PC-9 (cell line): ENCODE measurements at regions of chr12 and their contacts with region 1.

Region 1: DNA sequence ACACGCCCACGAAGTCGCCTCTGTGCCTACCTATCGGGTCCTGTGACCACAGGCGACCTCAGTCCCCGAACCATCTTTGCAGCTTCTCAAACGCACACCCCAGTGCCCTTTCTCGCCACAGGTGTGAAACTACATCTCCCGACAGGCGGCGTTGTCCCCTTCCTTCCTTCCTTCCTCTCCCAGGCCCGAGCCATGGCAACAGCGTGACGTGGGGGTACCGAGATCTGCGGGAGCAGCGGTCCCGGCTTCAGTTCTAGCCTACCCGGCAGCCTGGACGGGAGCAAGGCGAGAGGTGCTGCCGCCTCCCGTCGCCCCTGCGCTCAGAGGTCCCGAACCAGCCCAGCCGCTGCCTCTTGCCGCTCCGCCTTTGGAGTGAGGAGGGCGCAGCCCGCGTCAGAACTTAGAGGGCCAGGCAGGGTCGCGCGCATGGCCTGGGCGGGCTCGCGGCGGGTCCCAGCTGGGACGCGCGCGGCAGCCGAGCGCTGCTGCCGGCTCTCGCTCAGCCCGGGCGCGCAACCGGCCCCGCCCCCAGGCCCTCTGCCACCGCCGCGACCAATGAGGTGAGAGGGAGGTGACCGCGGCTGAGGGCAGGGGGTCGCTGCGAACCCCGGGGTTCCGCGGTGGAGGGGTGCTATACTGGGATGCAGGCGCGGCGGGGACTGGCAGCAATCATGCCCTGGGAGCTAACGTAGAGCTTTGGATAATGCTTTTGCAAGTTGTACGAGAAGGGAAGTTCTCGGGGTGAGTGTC is at the start of gene COQ10A:
- DNase-seq: peak; percentile 57 to 85
- H3K4me3 ChIP-seq: peak within 1 kb of the TSS; percentile 75
- H3K27ac ChIP-seq: no peak within 1 kb of the TSS
- H3K4me1 ChIP-seq: peaks cover 15% of the 10 kb centered on the region
- H3K27me3 ChIP-seq: no peaks in the 10 kb centered on the region
- CTCF ChIP-seq: peak; percentile 73
- total RNA-seq, gene COQ10A: 6.5 and 6.9 TPM in 2 replicates

Region 2: DNA sequence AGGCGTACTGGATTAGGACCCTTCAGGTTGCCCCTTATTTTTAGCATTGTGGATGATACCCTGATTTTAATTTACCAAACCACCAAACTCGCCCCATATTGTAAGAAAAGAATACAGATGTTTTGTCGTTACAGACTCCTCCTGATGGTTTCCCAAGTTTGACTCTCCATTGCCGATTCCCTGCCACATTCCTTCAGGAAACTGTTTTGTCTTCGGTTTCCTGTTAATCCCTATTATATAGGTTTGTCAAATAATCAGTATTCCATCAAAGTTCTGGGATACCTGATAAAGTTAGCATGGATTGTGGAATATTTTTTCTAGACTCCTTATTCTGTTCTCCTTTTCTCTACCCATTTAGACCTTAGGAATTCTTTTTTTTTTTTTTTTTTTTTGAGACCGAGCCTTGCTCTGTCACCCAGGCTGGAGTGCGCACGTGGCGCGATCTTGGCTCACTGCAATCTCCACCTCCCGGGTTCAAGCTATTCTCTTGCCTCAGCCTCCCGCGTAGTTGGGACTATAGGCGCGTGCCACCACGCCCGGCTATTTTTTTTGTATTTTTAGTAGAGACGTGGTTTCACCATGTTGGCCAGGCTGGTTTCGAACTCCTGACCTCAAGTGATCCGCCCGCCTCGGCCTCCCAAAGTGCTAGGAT is 1941.3 kb before region 1 on chr12:
- CTCF ChIA-PET with region 1: no interaction called
- POLR2A ChIA-PET with region 1: no interaction called
- intact Hi-C with region 1: no loop called
- DNase-seq: no peak
- H3K4me3 ChIP-seq: peak overlapping the region; percentile 93
- H3K27ac ChIP-seq: peak overlapping the region; percentile 92
- H3K4me1 ChIP-seq: peaks cover 44% of the 10 kb centered on the region
- H3K27me3 ChIP-seq: no peaks in the 10 kb centered on the region
- CTCF ChIP-seq: no peak

Region 3: GRCh38 chr12:56189176-56189917 is 77.5 kb before region 1 on chr12 and contains the start of gene SMARCC2:
- CTCF ChIA-PET with region 1: no interaction called
- POLR2A ChIA-PET with region 1: no interaction called
- intact Hi-C with region 1: loop called (anchors 5 kb)
- DNase-seq: peak; percentile 71 to 91
- H3K4me3 ChIP-seq: peak within 1 kb of the TSS; percentile 99
- H3K27ac ChIP-seq: peak within 1 kb of the TSS; percentile 85
- H3K4me1 ChIP-seq: peaks cover 28% of the 10 kb centered on the region
- H3K27me3 ChIP-seq: no peaks in the 10 kb centered on the region
- CTCF ChIP-seq: peak; percentile 68
- total RNA-seq, gene SMARCC2: 70.3 and 86.4 TPM in 2 replicates

Region 4: GRCh38 chr12:56213830-56214229 is 53.0 kb before region 1 on chr12:
- CTCF ChIA-PET with region 1: no interaction called
- POLR2A ChIA-PET with region 1: interaction called, 11 read pairs
- intact Hi-C with region 1: no loop called
- DNase-seq: no peak
- H3K4me3 ChIP-seq: no peak overlapping the region
- H3K27ac ChIP-seq: no peak overlapping the region
- H3K4me1 ChIP-seq: no peaks in the 10 kb centered on the region
- H3K27me3 ChIP-seq: no peaks in the 10 kb centered on the region
- CTCF ChIP-seq: no peak